Prostate gland (tissue), 2 donors: ENCODE measurements at regions of chr17 and their contacts with region 1.

Region 1: GRCh38 chr17:12730931-12731521 is 58.3 kb upstream of the ARHGAP44 start:
- DNase-seq: peak; percentile 15
- H3K4me3 ChIP-seq: no peak overlapping the region
- H3K27ac ChIP-seq: no peak overlapping the region
- H3K4me1 ChIP-seq: peaks cover 4% of the 10 kb centered on the region
- H3K27me3 ChIP-seq: no peaks in the 10 kb centered on the region
- CTCF ChIP-seq: no peak
- POLR2A ChIP-seq: no peak

Region 2: DNA sequence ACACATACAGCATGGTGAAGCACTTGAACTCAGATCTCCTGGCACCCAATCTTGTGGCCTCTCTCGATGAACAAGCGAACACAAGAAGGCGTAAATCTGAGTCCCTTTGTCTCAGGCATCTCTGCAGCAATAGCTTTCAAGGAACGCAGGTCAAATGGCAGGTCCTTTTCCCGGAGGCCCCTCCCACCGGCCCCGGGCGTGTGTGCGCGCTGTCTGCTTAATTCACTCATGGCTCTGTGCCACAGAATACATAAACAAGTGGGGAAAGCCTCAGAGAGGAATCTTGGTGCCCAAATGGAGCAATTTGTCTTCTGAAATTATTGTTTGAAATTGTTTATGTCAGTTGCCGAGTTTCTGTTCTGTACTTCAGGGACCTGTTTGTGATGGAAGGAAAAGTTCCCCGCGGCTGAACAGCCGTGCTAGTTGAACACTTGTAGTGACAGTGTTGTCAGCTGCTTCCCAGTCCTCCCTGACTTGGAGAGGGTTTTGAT is 50.6 kb before region 1 on chr17:
- intact Hi-C with region 1: loop called (anchors 5 kb)
- DNase-seq: no peak
- H3K4me3 ChIP-seq: no peak overlapping the region
- H3K27ac ChIP-seq: no peak overlapping the region
- H3K4me1 ChIP-seq: no peaks in the 10 kb centered on the region
- H3K27me3 ChIP-seq: no peaks in the 10 kb centered on the region
- CTCF ChIP-seq: no peak
- POLR2A ChIP-seq: no peak

Region 3: GRCh38 chr17:13329441-13330080 is 598.5 kb after region 1 on chr17:
- intact Hi-C with region 1: no loop called
- DNase-seq: no peak
- H3K4me3 ChIP-seq: no peak overlapping the region
- H3K27ac ChIP-seq: no peak overlapping the region
- H3K4me1 ChIP-seq: no peaks in the 10 kb centered on the region
- H3K27me3 ChIP-seq: no peaks in the 10 kb centered on the region
- CTCF ChIP-seq: no peak
- POLR2A ChIP-seq: no peak